ENCODE measurements at regions of chr13 and their contacts with region 1.

Region 1: DNA sequence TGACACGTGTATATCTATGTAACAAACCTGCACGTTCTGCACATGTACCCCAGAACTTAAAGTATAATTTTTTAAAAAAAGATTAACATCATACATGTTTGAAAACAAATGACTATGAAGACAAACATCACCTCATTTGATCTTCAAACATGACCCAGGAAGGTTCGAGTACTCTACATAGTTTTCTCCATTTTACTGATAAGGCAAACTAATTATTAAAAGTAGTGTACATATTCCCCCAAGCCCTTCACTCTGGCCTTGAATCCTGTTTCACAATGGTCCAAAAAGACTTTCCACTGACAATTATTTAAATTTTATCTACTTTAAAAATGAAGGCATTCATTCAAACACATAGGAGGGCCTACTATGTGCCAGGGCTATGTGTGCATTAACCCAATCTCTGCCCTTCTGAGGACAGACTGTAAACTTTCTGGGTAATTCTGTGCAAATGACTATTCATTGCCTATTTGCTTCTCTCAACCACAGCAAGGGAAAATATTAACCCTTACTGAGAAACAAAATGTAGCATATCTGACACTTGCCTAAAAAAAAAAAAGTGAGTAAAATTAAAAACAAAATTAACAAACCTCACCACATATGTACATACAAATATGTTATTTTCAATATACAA is 22.1 kb downstream of the ATP7B start:
- DNase-seq: no peak
- ATAC-seq: no peak
- H3K4me3 ChIP-seq: no peak overlapping the region
- H3K27ac ChIP-seq: no peak overlapping the region
- H3K4me1 ChIP-seq: peaks cover 9% of the 10 kb centered on the region
- H3K27me3 ChIP-seq: no peaks in the 10 kb centered on the region
- CTCF ChIP-seq: no peak

Region 2: GRCh38 chr13:51955281-51955771 is 33.8 kb before region 1 on chr13:
- CTCF ChIA-PET with region 1: no interaction called
- POLR2A ChIA-PET with region 1: interaction called, 11 read pairs
- in situ Hi-C with region 1: no loop called
- intact Hi-C with region 1: no loop called
- DNase-seq: no peak
- ATAC-seq: no peak
- H3K4me3 ChIP-seq: no peak overlapping the region
- H3K27ac ChIP-seq: no peak overlapping the region
- H3K4me1 ChIP-seq: no peaks in the 10 kb centered on the region
- H3K27me3 ChIP-seq: no peaks in the 10 kb centered on the region
- CTCF ChIP-seq: no peak

Region 3: GRCh38 chr13:52147225-52147624 is 158.1 kb after region 1 on chr13:
- CTCF ChIA-PET with region 1: no interaction called
- POLR2A ChIA-PET with region 1: no interaction called
- in situ Hi-C with region 1: no loop called
- intact Hi-C with region 1: no loop called
- DNase-seq: no peak
- ATAC-seq: no peak
- H3K4me3 ChIP-seq: no peak overlapping the region
- H3K27ac ChIP-seq: no peak overlapping the region
- H3K4me1 ChIP-seq: no peaks in the 10 kb centered on the region
- H3K27me3 ChIP-seq: no peaks in the 10 kb centered on the region
- CTCF ChIP-seq: no peak

Measured in Panc1 (cell line).